PC-3 (cell line): ENCODE measurements at regions of chr13 and their contacts with region 1.

Region 1: DNA sequence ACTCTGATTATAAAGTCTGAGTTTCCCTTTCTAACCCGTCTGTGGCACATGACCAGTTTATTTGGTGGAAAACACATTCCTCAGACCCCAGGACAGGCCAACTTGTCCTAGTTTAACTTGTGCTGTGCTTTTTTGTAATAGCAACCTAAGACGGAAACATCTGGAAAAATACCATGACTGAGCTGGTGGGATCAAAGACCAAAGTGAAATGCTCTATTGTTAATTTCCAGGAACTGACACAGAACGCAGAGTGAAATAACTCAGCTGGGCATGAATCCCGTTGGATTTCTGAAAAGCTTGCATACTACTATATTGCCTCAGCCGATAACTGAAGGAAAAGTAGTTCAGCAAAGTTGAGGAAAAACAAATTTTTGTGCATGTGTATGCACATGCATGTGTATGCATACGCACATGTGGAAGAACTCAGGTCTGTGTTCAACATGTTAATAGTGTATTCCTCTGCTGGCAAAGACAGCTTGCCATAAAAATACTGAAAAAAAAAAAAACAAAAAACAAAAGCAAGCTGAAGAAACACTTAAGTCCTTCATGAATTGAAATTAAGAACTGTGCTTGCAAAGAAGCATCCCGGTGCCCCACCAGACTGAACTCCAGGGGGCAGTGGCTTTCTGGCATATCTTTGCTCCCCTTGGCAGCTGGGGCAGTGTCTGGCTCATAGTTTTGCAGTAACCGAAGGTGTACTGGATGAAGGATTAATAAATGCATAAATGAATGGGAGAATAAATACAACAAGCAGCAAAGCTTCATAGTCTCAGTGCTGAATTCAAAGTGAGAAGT is 187.8 kb downstream of the LHFPL6 start:
- DNase-seq: peak; percentile 44
- ATAC-seq: peak; percentile 81
- H3K4me3 ChIP-seq: no peak overlapping the region
- H3K27ac ChIP-seq: no peak overlapping the region
- H3K4me1 ChIP-seq: peaks cover 7% of the 10 kb centered on the region; the same call in 1 of the 2 replicates
- H3K27me3 ChIP-seq: no peaks in the 10 kb centered on the region
- CTCF ChIP-seq: peak; percentile 66

Region 2: DNA sequence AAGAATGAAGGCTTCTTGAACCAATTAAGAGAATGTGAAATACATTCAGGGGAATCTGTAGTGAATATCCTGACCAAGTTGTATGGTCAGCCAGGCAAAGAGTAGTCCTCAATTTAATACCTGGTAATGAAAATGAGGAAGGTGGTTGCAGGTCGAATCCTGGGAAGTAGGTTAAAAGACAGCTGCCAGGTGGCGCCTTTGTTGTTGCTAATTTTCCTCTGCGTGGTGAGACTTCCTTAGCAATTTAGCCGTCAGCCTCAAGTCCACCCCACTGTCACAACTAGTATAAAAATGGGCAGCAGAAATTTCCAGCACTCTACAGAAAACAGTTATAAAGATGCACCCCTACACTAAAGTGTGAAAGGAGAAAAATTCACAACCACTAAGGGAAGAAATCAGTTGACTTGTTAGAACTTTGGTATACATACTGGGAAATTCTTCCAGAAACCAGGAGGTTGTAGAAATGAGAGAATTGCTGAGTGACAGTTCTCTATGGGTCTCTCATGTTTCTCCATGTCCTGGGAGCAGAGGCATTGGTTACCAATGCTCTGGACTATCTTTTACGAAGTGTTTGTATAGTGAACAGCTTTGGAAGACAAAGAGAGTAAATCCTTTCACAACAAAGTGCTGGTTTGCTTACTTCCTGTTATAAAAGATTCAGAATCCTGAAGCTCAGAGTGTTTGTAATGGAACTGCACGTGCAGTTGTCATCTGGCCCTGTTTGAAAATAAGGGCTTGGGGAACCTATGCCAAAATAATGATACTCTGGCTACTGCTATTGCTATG is 141.1 kb before region 1 on chr13:
- CTCF ChIA-PET with region 1: no interaction called
- POLR2A ChIA-PET with region 1: no interaction called
- intact Hi-C with region 1: loop called (anchors 5 kb)
- DNase-seq: peak; percentile 28
- ATAC-seq: peak; percentile 64
- H3K4me3 ChIP-seq: no peak overlapping the region
- H3K27ac ChIP-seq: no peak overlapping the region
- H3K4me1 ChIP-seq: no peaks in the 10 kb centered on the region
- H3K27me3 ChIP-seq: peaks cover 10% of the 10 kb centered on the region; the same call in 1 of the 2 replicates
- CTCF ChIP-seq: peak; percentile 42; the same call in 1 of the 2 replicates

Region 3: GRCh38 chr13:40886017-40886416 is 1470.8 kb after region 1 on chr13:
- CTCF ChIA-PET with region 1: no interaction called
- POLR2A ChIA-PET with region 1: no interaction called
- intact Hi-C with region 1: no loop called
- DNase-seq: no peak
- ATAC-seq: no peak
- H3K4me3 ChIP-seq: no peak overlapping the region
- H3K27ac ChIP-seq: no peak overlapping the region
- H3K4me1 ChIP-seq: no peaks in the 10 kb centered on the region
- H3K27me3 ChIP-seq: no peaks in the 10 kb centered on the region
- CTCF ChIP-seq: no peak